A549 (cell line): ENCODE measurements at regions of chr1 and their contacts with region 1.

Region 1: DNA sequence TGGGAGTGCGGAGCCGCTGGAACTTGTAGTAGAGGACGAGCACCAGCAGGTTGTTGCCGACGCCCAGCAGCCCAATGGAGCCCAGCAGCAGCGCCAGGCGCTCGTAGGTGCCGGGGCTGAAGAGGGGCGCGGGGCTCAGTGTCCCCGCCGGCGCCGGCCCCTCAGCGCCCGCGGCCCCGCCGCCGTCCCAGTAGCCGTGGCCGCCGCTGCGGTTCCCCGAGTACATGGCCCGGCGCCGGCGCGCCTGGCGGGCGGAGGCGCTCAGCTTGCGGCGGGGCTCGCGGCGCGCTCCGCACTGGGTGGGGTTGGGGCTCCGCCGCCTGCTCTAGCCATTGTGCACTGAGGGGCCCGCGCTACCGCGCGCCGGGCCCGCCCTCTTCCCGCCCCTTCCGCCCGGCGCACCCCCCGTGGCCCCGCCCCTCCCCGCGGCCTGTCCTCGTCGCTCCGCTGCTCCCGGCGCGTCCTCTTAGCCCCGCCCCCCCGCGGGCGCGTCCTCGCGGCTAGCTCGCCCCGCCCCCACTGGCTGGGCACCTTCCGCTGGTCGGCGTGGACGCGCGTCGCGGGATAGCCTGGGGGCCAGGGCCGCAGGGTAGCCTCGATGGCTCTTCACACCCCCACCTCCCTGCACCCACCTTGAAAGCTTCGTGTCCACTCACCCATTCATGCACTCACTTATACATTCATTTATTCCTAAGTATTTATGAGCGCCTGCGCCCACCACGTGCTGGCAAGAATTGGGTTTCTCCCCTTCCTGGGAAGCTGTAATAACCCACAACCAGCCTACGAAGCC is at the starts of genes CHML and OPN3:
- DNase-seq: peak; percentile 82 to 92
- ATAC-seq: peak; percentile 78 to 87
- H3K4me3 ChIP-seq: peak within 1 kb of the TSS; percentile 74
- H3K27ac ChIP-seq: peak within 1 kb of the TSS; percentile 89 to 98
- H3K4me1 ChIP-seq: peaks cover 41% of the 10 kb centered on the region
- CTCF ChIP-seq: no peak
- EP300 ChIP-seq: no peak
- POLR2A ChIP-seq: peak; percentile 87
- RAD21 ChIP-seq: no peak; a peak in 1 of 5 replicates
- polyA plus RNA-seq, gene CHML: 12.5 and 15.2 TPM in 2 replicates
- polyA plus RNA-seq, gene OPN3: 119 and 144 TPM in 2 replicates

Region 2: GRCh38 chr1:241605146-241605805 is 34.9 kb before region 1 on chr1:
- CTCF ChIA-PET with region 1: interaction called, 24 read pairs
- POLR2A ChIA-PET with region 1: interaction called, 4 read pairs
- DNase-seq: peak; percentile 64 to 79
- ATAC-seq: peak; percentile 81 to 82
- H3K4me3 ChIP-seq: no peak overlapping the region
- H3K27ac ChIP-seq: peak overlapping the region; percentile 58 to 84
- H3K4me1 ChIP-seq: peaks cover 77% of the 10 kb centered on the region
- CTCF ChIP-seq: peak; percentile 47; the same call in 2 of the 3 replicates
- EP300 ChIP-seq: no peak
- POLR2A ChIP-seq: no peak
- RAD21 ChIP-seq: peak; percentile 41 to 46; a peak in 4 of 5 replicates

Region 3: GRCh38 chr1:241627453-241628259 is 12.6 kb before region 1 on chr1:
- CTCF ChIA-PET with region 1: interaction called, 11 read pairs
- POLR2A ChIA-PET with region 1: interaction called, 4 read pairs
- DNase-seq: peak; percentile 60 to 79
- ATAC-seq: peak; percentile 66 to 81; a peak in 5 of 6 replicates
- H3K4me3 ChIP-seq: no peak overlapping the region
- H3K27ac ChIP-seq: peak overlapping the region; percentile 39 to 42; a peak in 4 of 6 replicates
- H3K4me1 ChIP-seq: peaks cover 46% of the 10 kb centered on the region
- CTCF ChIP-seq: peak; percentile 90
- EP300 ChIP-seq: no peak
- POLR2A ChIP-seq: no peak
- RAD21 ChIP-seq: peak; percentile 90 to 92